ENCODE measurements at regions of chr22 and their contacts with region 1.

Region 1: GRCh38 chr22:48098243-48098920 is 1335.9 kb downstream of the TBC1D22A start:
- DNase-seq: peak; percentile 96
- H3K4me3 ChIP-seq: peak overlapping the region; percentile 58
- H3K27ac ChIP-seq: peak overlapping the region; percentile 98
- H3K4me1 ChIP-seq: peaks cover 81% of the 10 kb centered on the region
- CTCF ChIP-seq: no peak

Region 2: DNA sequence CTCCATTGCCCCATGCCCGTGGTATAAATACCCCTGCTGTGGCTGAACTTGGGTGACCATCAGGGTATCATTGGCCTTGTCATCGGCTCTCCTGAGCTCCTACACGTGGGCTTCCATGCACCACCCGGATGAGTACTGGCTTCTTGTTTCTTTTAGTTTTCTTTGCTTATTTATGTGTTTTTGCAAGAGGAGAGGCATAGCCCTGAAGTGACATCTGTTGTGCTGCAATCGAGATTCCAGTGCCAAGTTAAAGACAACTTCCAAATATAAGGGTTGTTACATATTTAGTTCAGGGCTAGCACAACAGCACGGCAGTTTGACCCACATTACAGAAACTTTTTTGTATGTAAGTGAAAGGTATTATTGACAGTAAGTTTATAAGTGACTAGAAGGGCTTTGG is 248.8 kb before region 1 on chr22:
- CTCF ChIA-PET with region 1: no interaction called
- POLR2A ChIA-PET with region 1: interaction called, 11 read pairs
- intact Hi-C with region 1: no loop called
- DNase-seq: no peak
- H3K4me3 ChIP-seq: no peak overlapping the region
- H3K27ac ChIP-seq: no peak overlapping the region
- H3K4me1 ChIP-seq: peaks cover 17% of the 10 kb centered on the region
- CTCF ChIP-seq: no peak

Region 3: DNA sequence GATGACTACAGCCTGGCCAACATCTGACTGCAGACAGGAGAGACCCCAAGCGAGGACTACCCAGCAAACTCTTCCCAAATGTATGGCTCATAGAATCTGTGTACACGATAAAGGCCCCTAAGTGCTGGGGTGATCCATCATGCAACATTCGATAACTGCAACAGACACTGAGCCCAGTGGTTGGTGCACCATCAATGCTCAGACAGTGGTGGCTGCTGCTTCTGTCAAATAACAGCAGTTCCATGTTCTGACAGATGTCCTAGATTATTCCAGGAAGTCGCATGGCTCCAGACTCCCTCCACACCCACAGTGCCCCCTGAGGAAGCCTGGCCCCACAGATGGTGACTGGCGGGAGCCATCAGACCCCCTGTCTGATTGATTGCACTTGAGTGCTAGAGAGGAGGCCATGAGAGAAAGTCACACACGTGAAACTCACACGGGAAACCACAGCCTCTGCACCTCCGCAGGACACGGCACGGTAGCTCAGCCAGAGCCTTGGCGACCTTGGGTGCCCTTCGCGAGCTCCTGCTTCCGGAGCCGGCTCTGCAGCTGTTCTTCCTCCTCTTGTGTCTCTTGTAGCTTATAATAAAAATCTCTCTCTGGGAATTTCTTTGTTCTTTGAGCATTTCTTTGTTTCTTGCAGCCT is 180.0 kb before region 1 on chr22:
- CTCF ChIA-PET with region 1: no interaction called
- POLR2A ChIA-PET with region 1: no interaction called
- intact Hi-C with region 1: loop called (anchors 1 kb)
- DNase-seq: peak; percentile 94
- H3K4me3 ChIP-seq: peak overlapping the region; percentile 55
- H3K27ac ChIP-seq: peak overlapping the region; percentile 97
- H3K4me1 ChIP-seq: peaks cover 68% of the 10 kb centered on the region
- CTCF ChIP-seq: peak; percentile 27; the same call in 1 of the 2 replicates

Region 4: DNA sequence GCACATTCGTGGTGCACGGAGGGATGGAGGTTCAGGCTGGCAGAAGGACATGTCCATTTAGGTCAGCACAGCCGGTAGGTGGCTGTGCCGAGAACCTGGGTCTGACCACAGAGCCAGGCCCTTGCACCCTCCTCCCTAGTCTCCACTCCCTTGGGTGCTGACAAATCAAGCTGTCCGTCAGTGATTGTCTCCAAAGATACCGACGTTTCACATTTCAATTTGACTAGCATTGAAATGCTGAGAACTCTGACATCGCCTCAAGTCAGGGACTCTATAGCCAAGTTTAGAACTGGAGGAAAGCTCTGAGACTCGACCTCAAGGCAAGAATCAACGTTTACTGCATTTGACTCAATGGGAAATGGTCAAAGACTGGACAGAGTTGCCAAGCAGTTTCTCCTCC is 14.9 kb before region 1 on chr22:
- CTCF ChIA-PET with region 1: interaction called, 6 read pairs
- POLR2A ChIA-PET with region 1: no interaction called
- intact Hi-C with region 1: loop called (anchors 1 kb)
- DNase-seq: no peak
- H3K4me3 ChIP-seq: no peak overlapping the region
- H3K27ac ChIP-seq: no peak overlapping the region
- H3K4me1 ChIP-seq: peaks cover 67% of the 10 kb centered on the region
- CTCF ChIP-seq: no peak

Region 5: GRCh38 chr22:48112687-48113521 is 14.5 kb after region 1 on chr22:
- CTCF ChIA-PET with region 1: no interaction called
- POLR2A ChIA-PET with region 1: no interaction called
- intact Hi-C with region 1: no loop called
- DNase-seq: no peak
- H3K4me3 ChIP-seq: no peak overlapping the region
- H3K27ac ChIP-seq: no peak overlapping the region
- H3K4me1 ChIP-seq: peaks cover 3% of the 10 kb centered on the region
- CTCF ChIP-seq: no peak

Region 6: GRCh38 chr22:48444320-48445112 is 346.1 kb after region 1 on chr22:
- CTCF ChIA-PET with region 1: no interaction called
- POLR2A ChIA-PET with region 1: no interaction called
- intact Hi-C with region 1: loop called (anchors 2 kb)
- DNase-seq: peak; percentile 92
- H3K4me3 ChIP-seq: peak overlapping the region; percentile 38
- H3K27ac ChIP-seq: peak overlapping the region; percentile 55
- H3K4me1 ChIP-seq: peaks cover 34% of the 10 kb centered on the region
- CTCF ChIP-seq: no peak

Region 7: GRCh38 chr22:48832592-48832991 is 734.2 kb after region 1 on chr22:
- CTCF ChIA-PET with region 1: no interaction called
- POLR2A ChIA-PET with region 1: no interaction called
- intact Hi-C with region 1: loop called (anchors 5 kb)
- DNase-seq: no peak
- H3K4me3 ChIP-seq: no peak overlapping the region
- H3K27ac ChIP-seq: no peak overlapping the region
- H3K4me1 ChIP-seq: peaks cover 21% of the 10 kb centered on the region
- CTCF ChIP-seq: no peak

Measured in OCI-LY7 (cell line).